Left cardiac atrium (tissue), 4 donors: ENCODE measurements at regions of chr5 and their contacts with region 1.

Region 1: GRCh38 chr5:119284031-119284430 is 71.8 kb upstream of the TNFAIP8 start:
- DNase-seq: no peak
- ATAC-seq: no peak

Region 2: DNA sequence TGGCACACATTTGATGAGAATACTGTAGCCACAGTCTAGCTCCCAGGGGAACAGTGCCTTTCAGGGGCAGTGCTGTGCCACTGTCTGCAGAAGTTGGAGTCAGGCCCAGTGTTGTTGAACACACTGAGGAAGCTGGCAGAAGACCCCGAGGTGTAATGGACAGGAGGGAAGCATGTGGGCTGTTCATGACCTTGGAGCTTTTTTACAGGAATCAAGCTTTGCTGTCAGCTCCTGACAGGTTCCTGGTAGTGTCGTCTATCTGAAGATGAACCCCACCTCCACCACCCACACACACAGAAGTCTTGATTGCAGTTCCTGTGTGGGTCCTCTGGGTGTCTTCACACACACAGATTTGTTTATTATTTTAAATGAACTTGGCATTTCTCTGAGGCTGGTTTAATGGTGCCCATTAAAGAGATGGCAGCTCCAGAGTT is 31.5 kb after region 1 on chr5:
- intact Hi-C with region 1: loop called in 1 of 2 experiments (anchors 5 kb)
- DNase-seq: no peak
- ATAC-seq: peak; percentile 77 to 83

Region 3: GRCh38 chr5:119411935-119412602 is 128.0 kb after region 1 on chr5:
- intact Hi-C with region 1: no loop called
- DNase-seq: peak; percentile 35
- ATAC-seq: peak; percentile 92 to 95